ENCODE measurements at regions of chrX and their contacts with region 1.

Region 1: GRCh38 chrX:47595716-47596251 is 13.5 kb downstream of the TIMP1 start:
- DNase-seq: no peak
- ATAC-seq: no peak
- H3K4me3 ChIP-seq: no peak overlapping the region
- H3K27ac ChIP-seq: no peak overlapping the region
- H3K4me1 ChIP-seq: no peaks in the 10 kb centered on the region
- H3K27me3 ChIP-seq: no peaks in the 10 kb centered on the region
- CTCF ChIP-seq: no peak

Region 2: GRCh38 chrX:47560831-47561652 is 34.7 kb before region 1 on chrX and contains the start of gene ARAF:
- CTCF ChIA-PET with region 1: no interaction called
- POLR2A ChIA-PET with region 1: no interaction called
- intact Hi-C with region 1: loop called (anchors 2 kb)
- DNase-seq: peak; percentile 99
- ATAC-seq: peak; percentile 87
- H3K4me3 ChIP-seq: peak within 1 kb of the TSS; percentile 99
- H3K27ac ChIP-seq: peak within 1 kb of the TSS; percentile 81
- H3K4me1 ChIP-seq: peaks cover 32% of the 10 kb centered on the region
- H3K27me3 ChIP-seq: no peaks in the 10 kb centered on the region
- CTCF ChIP-seq: no peak
- total RNA-seq, gene ARAF: 52.6 and 77.1 TPM in 2 replicates

Region 3: GRCh38 chrX:47723689-47724088 is 127.9 kb after region 1 on chrX:
- CTCF ChIA-PET with region 1: no interaction called
- POLR2A ChIA-PET with region 1: no interaction called
- intact Hi-C with region 1: no loop called
- DNase-seq: no peak
- ATAC-seq: no peak
- H3K4me3 ChIP-seq: no peak overlapping the region
- H3K27ac ChIP-seq: no peak overlapping the region
- H3K4me1 ChIP-seq: no peaks in the 10 kb centered on the region
- H3K27me3 ChIP-seq: peaks cover 3% of the 10 kb centered on the region; the same call in 1 of the 2 replicates
- CTCF ChIP-seq: peak; percentile 12; the same call in 1 of the 2 replicates

Measured in PC-3 (cell line).